Gastrocnemius medialis (tissue), 4 donors: ENCODE measurements at regions of chr7 and their contacts with region 1.

Region 1: DNA sequence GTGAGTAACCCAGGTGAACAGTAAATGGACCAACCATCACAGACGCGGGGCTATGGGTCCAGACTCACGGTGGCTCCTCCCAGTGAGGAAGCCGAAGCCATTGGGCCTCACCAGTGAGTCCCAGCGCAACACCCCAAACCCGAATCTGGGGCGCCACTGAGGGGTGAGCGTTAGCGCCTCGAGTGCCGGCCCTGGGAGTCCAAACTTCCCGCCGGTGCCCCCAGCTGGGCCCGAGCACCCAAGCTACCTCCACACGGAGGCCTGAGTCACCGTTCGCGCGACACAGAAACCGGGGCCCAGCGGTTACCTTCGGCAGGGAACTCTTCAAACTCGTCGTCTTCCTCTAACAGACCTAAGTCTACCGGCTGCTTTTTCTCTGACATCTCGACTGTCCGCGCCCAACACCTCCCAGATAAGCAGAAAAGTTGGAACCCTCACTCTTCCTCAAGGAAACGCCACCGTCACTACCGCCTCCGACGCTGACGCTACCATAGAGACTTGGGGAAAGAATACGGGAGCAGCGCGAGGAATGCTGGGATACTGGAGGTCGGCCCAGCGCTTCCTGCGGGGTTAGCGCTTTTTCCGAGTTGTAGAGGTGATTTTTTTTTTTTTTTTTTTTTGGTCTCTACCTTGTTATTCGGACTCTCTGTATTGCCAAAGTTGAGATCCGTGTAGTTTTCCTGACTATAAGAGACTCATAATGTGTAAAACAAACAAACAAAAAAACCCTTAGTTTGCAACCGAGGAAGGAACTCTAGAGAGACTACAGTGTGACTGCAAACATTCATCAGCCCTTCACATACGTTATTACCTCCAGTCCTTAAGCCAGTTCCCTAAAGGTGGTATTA is at the start of gene SEM1:
- DNase-seq: peak; percentile 76 to 80
- ATAC-seq: peak; percentile 99 to 100
- H3K4me3 ChIP-seq: peak within 1 kb of the TSS; percentile 78 to 95 (median 82)
- H3K27ac ChIP-seq: peak within 1 kb of the TSS; percentile 90 to 94 (median 92)
- H3K4me1 ChIP-seq: peaks cover 14 to 27% of the 10 kb centered on the region in 2 donors
- H3K27me3 ChIP-seq: peaks cover 0 to 5% (median 0%) of the 10 kb centered on the region in 3 donors
- CTCF ChIP-seq: no peak
- POLR2A ChIP-seq: peak in 1 of 2 donors; percentile 68
- total RNA-seq, gene SEM1: 18.6 to 66.0 (median 20.9) TPM

Region 2: DNA sequence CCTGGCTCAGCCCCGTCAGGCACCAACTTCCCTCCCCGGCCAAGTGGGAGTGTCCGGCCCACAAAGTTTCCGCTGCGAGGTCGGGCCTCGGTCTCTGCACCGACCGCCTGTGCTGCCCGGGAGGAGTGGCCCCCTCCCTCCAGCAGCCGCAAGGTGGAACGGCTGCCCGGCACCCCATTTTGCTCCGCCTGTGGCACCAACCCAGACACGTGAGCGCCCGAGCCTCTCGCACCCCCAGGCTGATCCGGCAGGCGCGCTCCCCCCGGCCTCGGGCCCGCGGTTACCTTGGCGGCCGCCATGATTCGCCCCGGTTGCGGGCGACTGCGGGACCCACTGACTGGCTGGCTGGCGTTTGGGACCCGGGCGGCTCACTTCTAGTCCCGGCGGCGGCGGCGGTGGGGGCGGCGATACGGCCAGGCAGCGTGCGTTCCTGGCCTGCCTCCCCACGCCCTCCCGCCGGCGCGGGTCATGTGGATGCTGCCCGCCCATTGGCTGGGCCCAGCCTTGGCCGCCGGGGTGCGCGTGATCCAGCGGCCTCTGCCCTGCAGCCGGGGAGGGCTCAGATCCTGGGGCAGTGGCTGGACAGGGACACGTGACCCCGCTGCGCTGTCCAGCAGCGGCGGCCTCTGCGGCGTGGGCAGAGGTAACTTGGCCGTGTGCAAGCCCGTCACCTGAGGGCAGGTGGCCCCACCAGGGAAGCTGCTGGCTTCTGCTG is 387.8 kb before region 1 on chr7 and contains the start of gene SLC25A13:
- in situ Hi-C with region 1: no loop called
- intact Hi-C with region 1: loop called (anchors 5 kb)
- DNase-seq: peak; percentile 91 to 94
- ATAC-seq: peak; percentile 86 to 87
- H3K4me3 ChIP-seq: peak within 1 kb of the TSS; percentile 89 to 97 (median 92)
- H3K27ac ChIP-seq: peak within 1 kb of the TSS; percentile 97 to 99 (median 99)
- H3K4me1 ChIP-seq: peaks cover 40 to 42% of the 10 kb centered on the region in 2 donors
- H3K27me3 ChIP-seq: no peaks in the 10 kb centered on the region
- CTCF ChIP-seq: peak in 2 of 5 experiments; percentile 4 to 9
- POLR2A ChIP-seq: peak; percentile 84 to 93
- total RNA-seq, gene SLC25A13: 9.2 to 30.8 (median 13.6) TPM

Region 3: DNA sequence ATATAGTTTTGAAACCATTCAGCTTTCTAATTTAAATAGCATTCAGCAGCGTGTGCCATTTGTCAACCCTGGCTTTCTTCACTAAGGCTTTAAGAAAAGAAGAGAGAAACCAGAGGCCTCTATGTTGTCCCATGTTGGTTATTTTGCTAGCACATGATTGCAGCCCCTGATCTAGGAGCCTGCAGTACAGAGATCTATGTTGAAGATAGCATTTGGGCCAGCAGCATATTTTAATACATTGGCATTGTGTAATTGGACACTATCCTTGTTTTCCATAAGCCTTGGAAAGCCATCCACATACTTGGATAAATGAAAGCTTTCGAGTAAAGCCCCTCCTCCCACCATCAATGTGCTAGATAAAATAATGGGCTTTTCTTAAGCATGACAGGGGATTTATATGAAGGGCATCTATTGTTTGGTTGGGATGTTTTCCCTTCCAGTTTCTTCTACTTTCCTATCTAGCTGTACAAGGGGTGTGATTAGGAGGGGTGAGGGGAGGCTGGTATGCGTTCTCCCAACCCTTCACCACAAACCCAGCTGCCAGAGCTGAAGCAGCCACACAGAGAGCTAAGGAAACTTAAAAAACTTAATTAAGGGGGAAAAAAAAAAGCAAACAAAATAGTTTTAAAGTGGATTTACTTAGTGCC is 384.8 kb after region 1 on chr7:
- in situ Hi-C with region 1: no loop called
- intact Hi-C with region 1: no loop called
- DNase-seq: no peak
- ATAC-seq: no peak
- H3K4me3 ChIP-seq: no peak overlapping the region
- H3K27ac ChIP-seq: no peak overlapping the region
- H3K4me1 ChIP-seq: no peaks in the 10 kb centered on the region
- H3K27me3 ChIP-seq: peaks cover 0 to 4% (median 0%) of the 10 kb centered on the region in 3 donors
- CTCF ChIP-seq: no peak
- POLR2A ChIP-seq: no peak